IMR-90 (cell line): ENCODE measurements at regions of chr20 and their contacts with region 1.

Region 1: DNA sequence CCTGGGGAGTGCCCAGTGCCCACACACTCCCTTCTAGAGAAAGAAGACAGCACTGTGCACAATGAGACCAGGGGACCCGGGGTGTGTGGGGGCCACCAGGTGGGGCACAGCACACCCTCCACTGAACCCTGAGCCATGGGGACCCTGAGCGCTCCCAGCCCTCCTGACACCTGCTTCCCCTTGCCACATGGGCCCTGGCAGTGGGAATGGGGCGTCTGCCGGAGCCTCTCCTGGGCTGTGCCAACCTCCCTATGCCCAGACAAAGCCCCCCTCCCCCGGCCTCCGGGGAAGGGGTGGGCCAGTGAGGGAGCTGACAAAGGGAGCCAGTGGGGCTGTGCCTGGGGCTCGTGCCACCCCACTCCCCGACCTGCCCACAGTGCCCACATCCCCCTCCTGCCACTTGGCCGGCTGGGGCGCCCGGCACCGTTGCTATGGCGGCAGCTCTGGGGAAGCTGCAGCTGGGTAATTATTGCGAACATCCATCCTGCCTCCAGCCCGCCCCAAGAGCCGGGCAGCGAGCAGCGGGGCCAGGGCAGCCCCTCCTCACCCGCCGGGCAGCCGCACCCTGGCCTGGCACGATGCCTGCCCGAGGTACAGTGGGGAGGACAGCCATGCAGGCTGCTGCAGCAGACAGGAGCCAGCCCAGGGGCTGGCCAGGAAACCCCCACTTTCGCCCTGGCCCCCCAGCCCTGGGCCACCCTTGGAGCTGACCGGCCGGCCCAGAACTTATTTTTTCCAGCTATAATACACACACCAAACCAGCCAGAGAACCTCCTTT is 41.9 kb upstream of the NOL4L start:
- DNase-seq: no peak
- ATAC-seq: peak; percentile 18; the same call in 1 of the 2 replicates
- H3K4me3 ChIP-seq: no peak overlapping the region
- H3K27ac ChIP-seq: no peak overlapping the region
- H3K4me1 ChIP-seq: peaks cover 2% of the 10 kb centered on the region; the same call in 1 of the 2 replicates
- H3K27me3 ChIP-seq: peaks cover 36% of the 10 kb centered on the region
- CTCF ChIP-seq: no peak
- POLR2A ChIP-seq: no peak
- RAD21 ChIP-seq: no peak

Region 2: GRCh38 chr20:32681175-32682084 is 54.4 kb after region 1 on chr20:
- CTCF ChIA-PET with region 1: no interaction called
- POLR2A ChIA-PET with region 1: no interaction called
- dilution Hi-C with region 1: no loop called
- in situ Hi-C with region 1: no loop called
- intact Hi-C with region 1: loop called (anchors 10 kb)
- DNase-seq: peak; percentile 17
- ATAC-seq: peak; percentile 55; the same call in 1 of the 2 replicates
- H3K4me3 ChIP-seq: no peak overlapping the region
- H3K27ac ChIP-seq: no peak overlapping the region
- H3K4me1 ChIP-seq: peaks cover 7% of the 10 kb centered on the region
- H3K27me3 ChIP-seq: no peaks in the 10 kb centered on the region
- CTCF ChIP-seq: no peak
- POLR2A ChIP-seq: no peak
- RAD21 ChIP-seq: no peak